AG04450 (cell line): ENCODE measurements at regions of chr4 and their contacts with region 1.

Region 1: DNA sequence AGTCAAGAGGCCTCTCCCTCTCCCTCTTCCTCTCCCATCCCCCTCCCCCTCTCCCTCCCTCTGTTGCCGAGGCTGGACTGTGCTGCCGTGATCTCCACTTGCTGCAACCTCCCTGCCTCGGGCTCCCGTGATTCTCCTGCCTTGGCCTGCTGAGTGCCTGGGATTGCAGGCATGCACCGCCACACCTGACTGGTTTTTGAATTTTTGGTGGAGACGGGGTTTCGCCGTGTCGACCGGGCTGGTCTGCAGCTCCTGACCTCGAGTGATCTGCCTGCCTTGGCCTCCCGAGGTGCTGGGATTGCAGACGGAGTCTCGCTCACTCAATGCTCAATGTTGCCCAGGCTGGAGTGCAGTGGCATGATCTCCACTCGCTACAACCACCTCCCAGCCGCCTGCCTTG is 165.1 kb downstream of the CENPC start:
- DNase-seq: no peak
- H3K4me3 ChIP-seq: no peak overlapping the region
- H3K27ac ChIP-seq: no peak overlapping the region
- H3K27me3 ChIP-seq: no peaks in the 10 kb centered on the region
- CTCF ChIP-seq: no peak

Region 2: GRCh38 chr4:67393699-67394281 is 13.6 kb after region 1 on chr4:
- CTCF ChIA-PET with region 1: interaction called, 10 read pairs
- POLR2A ChIA-PET with region 1: no interaction called
- DNase-seq: peak; percentile 16
- H3K4me3 ChIP-seq: no peak overlapping the region
- H3K27ac ChIP-seq: no peak overlapping the region
- H3K27me3 ChIP-seq: no peaks in the 10 kb centered on the region
- CTCF ChIP-seq: peak; percentile 64